Caco-2 (cell line): ENCODE measurements at regions of chr11 and their contacts with region 1.

Region 1: GRCh38 chr11:93525601-93526345 is 17.4 kb downstream of the SMCO4 start:
- DNase-seq: no peak
- H3K4me3 ChIP-seq: no peak overlapping the region
- H3K4me3 Mint-ChIP-seq: no peak overlapping the region
- H3K27ac Mint-ChIP-seq: no peak overlapping the region
- H3K4me1 ChIP-seq: peaks cover 14% of the 10 kb centered on the region; the same call in 1 of the 2 replicates
- H3K4me1 Mint-ChIP-seq: peaks cover 32% of the 10 kb centered on the region
- H3K27me3 ChIP-seq: no peaks in the 10 kb centered on the region
- H3K27me3 Mint-ChIP-seq: no peaks in the 10 kb centered on the region
- CTCF ChIP-seq: no peak

Region 2: GRCh38 chr11:93487032-93487483 is 38.7 kb before region 1 on chr11:
- CTCF ChIA-PET with region 1: no interaction called
- POLR2A ChIA-PET with region 1: no interaction called
- intact Hi-C with region 1: loop called (anchors 2 kb)
- DNase-seq: peak; percentile 80 to 86
- H3K4me3 ChIP-seq: no peak overlapping the region
- H3K4me3 Mint-ChIP-seq: no peak overlapping the region
- H3K27ac Mint-ChIP-seq: no peak overlapping the region
- H3K4me1 ChIP-seq: peaks cover 14% of the 10 kb centered on the region
- H3K4me1 Mint-ChIP-seq: peaks cover 11% of the 10 kb centered on the region
- H3K27me3 ChIP-seq: no peaks in the 10 kb centered on the region
- H3K27me3 Mint-ChIP-seq: no peaks in the 10 kb centered on the region
- CTCF ChIP-seq: no peak